ENCODE measurements at regions of chr7 and their contacts with region 1.

Region 1: GRCh38 chr7:4753711-4754432 is 21.6 kb upstream of the AP5Z1 start:
- DNase-seq: peak; percentile 88
- ATAC-seq: peak; percentile 98
- H3K4me3 Mint-ChIP-seq: no peak overlapping the region
- H3K27ac Mint-ChIP-seq: no peak overlapping the region
- H3K4me1 Mint-ChIP-seq: peaks cover 17% of the 10 kb centered on the region
- H3K27me3 Mint-ChIP-seq: no peaks in the 10 kb centered on the region
- CTCF ChIP-seq: peak; percentile 93

Region 2: DNA sequence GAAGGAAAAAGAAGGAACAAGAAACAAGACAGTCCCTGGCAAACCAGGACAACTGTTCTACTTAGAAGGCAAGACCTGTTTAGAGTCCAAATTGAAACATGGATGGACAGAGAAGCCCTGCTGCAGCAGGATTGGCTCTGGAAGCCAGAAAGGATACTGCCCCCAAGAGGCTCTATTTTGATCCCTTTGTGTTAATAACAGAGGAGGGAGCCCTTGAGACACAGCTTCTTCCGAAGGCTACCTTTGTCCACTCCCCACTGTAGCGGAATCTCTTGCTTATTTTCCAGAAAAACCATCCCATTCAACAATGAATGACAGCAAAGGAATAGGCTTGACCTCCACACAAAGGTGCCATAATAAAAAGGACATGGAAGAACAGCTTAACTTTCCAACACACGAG is 192.1 kb before region 1 on chr7:
- CTCF ChIA-PET with region 1: no interaction called
- POLR2A ChIA-PET with region 1: no interaction called
- intact Hi-C with region 1: no loop called
- DNase-seq: no peak
- ATAC-seq: no peak
- H3K4me3 Mint-ChIP-seq: no peak overlapping the region
- H3K27ac Mint-ChIP-seq: no peak overlapping the region
- H3K4me1 Mint-ChIP-seq: no peaks in the 10 kb centered on the region
- H3K27me3 Mint-ChIP-seq: peaks cover 16% of the 10 kb centered on the region
- CTCF ChIP-seq: no peak

Region 3: DNA sequence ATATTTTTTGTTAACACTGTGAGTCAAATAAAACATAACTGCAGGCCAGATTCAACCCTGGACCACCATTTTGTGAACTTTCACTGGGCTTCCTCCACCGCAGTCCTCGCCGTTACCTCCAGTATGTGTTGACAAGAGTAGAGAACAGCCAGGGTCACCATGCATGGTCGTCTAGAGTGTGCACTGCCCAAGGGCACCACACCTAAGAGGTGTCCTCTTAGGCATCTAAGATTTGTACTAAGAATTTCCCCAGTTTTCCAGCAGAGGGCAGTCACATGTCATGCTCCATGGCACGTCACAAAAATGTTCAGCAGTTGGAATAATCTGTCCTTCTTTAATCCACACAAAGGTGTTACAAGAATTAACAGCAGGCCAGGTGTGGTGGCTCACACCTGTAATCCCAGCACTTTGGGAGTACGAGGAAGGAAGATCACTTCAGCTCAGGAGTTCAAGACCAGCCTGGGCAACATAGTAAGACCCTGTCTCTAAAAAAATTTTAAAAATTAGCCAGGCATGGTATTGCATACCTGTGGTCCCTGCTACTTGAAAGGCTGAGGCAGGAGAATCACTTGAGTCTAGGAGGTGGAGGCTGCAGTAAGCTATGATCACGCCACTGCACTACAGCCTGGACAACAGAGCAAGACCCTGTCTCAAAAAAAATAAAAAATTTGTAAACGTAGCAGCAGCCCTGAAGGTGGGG is 143.0 kb before region 1 on chr7:
- CTCF ChIA-PET with region 1: no interaction called
- POLR2A ChIA-PET with region 1: no interaction called
- intact Hi-C with region 1: loop called (anchors 1 kb)
- DNase-seq: peak; percentile 61
- ATAC-seq: peak; percentile 82
- H3K4me3 Mint-ChIP-seq: no peak overlapping the region
- H3K27ac Mint-ChIP-seq: no peak overlapping the region
- H3K4me1 Mint-ChIP-seq: peaks cover 10% of the 10 kb centered on the region
- H3K27me3 Mint-ChIP-seq: no peaks in the 10 kb centered on the region
- CTCF ChIP-seq: peak; percentile 87

Measured in activated CD8-positive, alpha-beta T cell treated with anti-CD3 and anti-CD28 coated beads for 36 hours (primary cell).